CD8-positive, alpha-beta memory T cell (primary cell): ENCODE measurements at regions of chr5 and their contacts with region 1.

Region 1: GRCh38 chr5:151758430-151759241 is at the start of gene ATOX1:
- DNase-seq: peak; percentile 88 to 93 (median 89)
- H3K4me3 ChIP-seq: peak within 1 kb of the TSS; percentile 97
- H3K4me3 Mint-ChIP-seq: peak within 1 kb of the TSS; percentile 82 to 97 (median 92)
- H3K27ac ChIP-seq: peak within 1 kb of the TSS; percentile 82
- H3K27ac Mint-ChIP-seq: peak within 1 kb of the TSS; percentile 89 to 99 (median 92)
- H3K4me1 ChIP-seq: peaks cover 25% of the 10 kb centered on the region
- H3K4me1 Mint-ChIP-seq: peaks cover 32 to 45% (median 39%) of the 10 kb centered on the region in 3 donors
- H3K27me3 ChIP-seq: no peaks in the 10 kb centered on the region
- H3K27me3 Mint-ChIP-seq: no peaks in the 10 kb centered on the region
- total RNA-seq, gene ATOX1: 91.0 to 103 TPM

Region 2: GRCh38 chr5:151771259-151772028 is 12.8 kb after region 1 on chr5 and contains the start of gene G3BP1:
- CTCF ChIA-PET with region 1: interaction called, 25 read pairs
- POLR2A ChIA-PET with region 1: interaction called, 81 read pairs
- DNase-seq: peak; percentile 98 to 100 (median 100)
- H3K4me3 ChIP-seq: peak within 1 kb of the TSS; percentile 86
- H3K4me3 Mint-ChIP-seq: peak within 1 kb of the TSS in 6 of 7 donors; percentile 83 to 98 (median 94)
- H3K27ac ChIP-seq: peak within 1 kb of the TSS; percentile 84
- H3K27ac Mint-ChIP-seq: peak within 1 kb of the TSS in 7 of 8 donors; percentile 57 to 95 (median 91)
- H3K4me1 ChIP-seq: peaks cover 47% of the 10 kb centered on the region
- H3K4me1 Mint-ChIP-seq: peaks cover 38 to 49% (median 47%) of the 10 kb centered on the region in 3 donors
- H3K27me3 ChIP-seq: no peaks in the 10 kb centered on the region
- H3K27me3 Mint-ChIP-seq: no peaks in the 10 kb centered on the region
- total RNA-seq, gene G3BP1: 371 to 377 TPM

Region 3: DNA sequence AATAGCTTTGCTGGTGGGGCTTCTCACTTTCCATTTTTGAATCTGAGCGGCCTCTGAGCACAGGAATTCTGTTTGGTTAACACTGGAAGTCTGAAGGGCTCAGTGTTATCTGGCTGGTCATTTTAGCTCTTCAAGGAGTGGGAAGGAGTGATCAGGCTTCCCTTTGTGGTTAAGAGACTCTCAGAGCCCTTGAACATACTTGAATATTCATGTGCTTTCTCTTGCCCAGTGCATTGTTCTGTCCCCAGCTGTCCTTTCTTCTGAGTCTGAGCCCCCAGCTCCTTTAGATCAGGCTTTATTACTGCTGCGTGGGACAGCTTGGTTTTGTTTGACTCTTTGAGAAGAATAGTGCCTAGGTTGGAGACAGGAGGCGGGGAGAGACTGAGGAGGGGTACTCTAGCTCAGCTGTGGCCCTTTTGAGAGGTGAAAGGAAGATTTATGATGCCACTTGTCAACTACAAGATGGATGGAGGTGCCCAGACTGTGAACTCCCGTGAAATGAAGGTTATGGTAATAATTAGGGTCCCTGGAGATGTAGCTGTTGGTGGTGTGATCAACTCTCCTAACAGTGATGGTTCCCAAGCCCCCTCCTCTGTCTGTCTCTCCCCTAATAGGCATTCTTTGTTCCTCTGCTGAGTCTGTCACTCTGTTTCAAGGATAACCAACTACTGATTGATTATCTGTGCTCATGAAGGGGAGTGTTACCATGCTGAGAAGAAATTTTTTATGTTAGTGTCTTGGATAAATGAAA is 249.1 kb after region 1 on chr5:
- CTCF ChIA-PET with region 1: no interaction called
- POLR2A ChIA-PET with region 1: no interaction called
- DNase-seq: no peak
- H3K4me3 ChIP-seq: no peak overlapping the region
- H3K4me3 Mint-ChIP-seq: no peak overlapping the region
- H3K27ac ChIP-seq: no peak overlapping the region
- H3K27ac Mint-ChIP-seq: no peak overlapping the region
- H3K4me1 ChIP-seq: no peaks in the 10 kb centered on the region
- H3K4me1 Mint-ChIP-seq: no peaks in the 10 kb centered on the region
- H3K27me3 ChIP-seq: no peaks in the 10 kb centered on the region
- H3K27me3 Mint-ChIP-seq: peaks cover 0 to 3% of the 10 kb centered on the region in 2 donors